Tibial artery (tissue), 4 donors: ENCODE measurements at regions of chr3 and their contacts with region 1.

Region 1: GRCh38 chr3:129745253-129745652 is 138.8 kb upstream of the PLXND1 start:
- DNase-seq: no peak
- H3K4me3 ChIP-seq: no peak overlapping the region
- H3K27ac ChIP-seq: no peak overlapping the region
- H3K4me1 ChIP-seq: peaks cover 0 to 9% (median 2%) of the 10 kb centered on the region in 4 donors
- H3K27me3 ChIP-seq: no peaks in the 10 kb centered on the region
- CTCF ChIP-seq: no peak

Region 2: DNA sequence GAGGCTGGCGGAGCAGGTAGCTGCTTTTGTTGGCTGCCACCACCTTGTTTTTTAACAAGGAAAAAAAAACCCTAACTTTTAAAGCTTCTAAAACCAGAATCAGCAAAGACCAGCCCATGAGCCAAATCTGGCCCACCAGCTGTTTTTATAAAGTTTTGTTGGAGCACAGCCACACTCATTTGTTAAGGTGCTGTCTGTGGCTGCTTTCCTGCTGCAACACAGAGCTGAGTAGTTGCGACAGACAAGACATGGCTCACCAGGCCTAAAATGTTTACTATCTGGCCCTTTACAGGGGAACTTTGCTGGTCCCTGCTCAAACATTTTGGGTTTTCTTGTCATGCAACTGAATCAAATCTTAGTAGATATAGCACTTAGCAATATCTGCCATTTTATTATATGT is 335.7 kb before region 1 on chr3:
- intact Hi-C with region 1: loop called (anchors 5 kb)
- DNase-seq: no peak
- H3K4me3 ChIP-seq: no peak overlapping the region
- H3K27ac ChIP-seq: no peak overlapping the region
- H3K4me1 ChIP-seq: no peaks in the 10 kb centered on the region
- H3K27me3 ChIP-seq: peaks cover 0 to 4% of the 10 kb centered on the region in 2 donors
- CTCF ChIP-seq: no peak

Region 3: DNA sequence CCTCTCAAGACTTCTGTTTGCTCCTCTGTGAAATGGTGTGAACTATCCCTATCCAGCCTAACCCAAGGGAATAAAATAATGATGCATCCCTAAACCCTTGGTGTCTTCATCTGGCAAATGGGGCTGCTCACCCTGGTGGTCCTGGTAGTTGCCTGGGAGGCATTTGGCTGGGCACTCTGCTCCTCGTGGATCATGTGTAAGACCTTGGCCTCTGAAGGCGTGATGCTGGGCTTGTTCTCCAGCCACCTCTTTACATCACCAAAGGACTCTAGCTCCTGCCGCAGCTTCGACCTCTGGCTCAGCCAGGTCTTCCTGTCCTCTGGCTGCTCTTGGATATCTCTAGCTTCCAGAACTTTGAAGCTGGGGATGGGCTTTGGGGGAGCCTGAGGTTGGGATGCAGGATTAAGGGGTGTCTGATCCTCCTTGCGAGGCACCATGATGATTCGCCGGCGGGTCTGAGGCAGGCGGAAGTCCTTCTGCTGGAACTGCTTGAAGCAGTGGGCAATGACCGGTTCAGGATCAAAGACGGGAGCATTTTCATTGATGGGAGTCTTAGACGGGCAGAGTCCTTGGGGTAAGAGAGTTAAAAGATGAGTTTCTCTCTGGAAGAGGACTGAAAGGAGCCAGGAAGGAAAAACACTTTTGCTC is 323.9 kb before region 1 on chr3:
- intact Hi-C with region 1: no loop called
- DNase-seq: peak in 1 of 2 donors; percentile 58
- H3K4me3 ChIP-seq: no peak overlapping the region
- H3K27ac ChIP-seq: no peak overlapping the region
- H3K4me1 ChIP-seq: no peaks in the 10 kb centered on the region
- H3K27me3 ChIP-seq: peaks cover 0 to 8% of the 10 kb centered on the region in 2 donors
- CTCF ChIP-seq: no peak

Region 4: DNA sequence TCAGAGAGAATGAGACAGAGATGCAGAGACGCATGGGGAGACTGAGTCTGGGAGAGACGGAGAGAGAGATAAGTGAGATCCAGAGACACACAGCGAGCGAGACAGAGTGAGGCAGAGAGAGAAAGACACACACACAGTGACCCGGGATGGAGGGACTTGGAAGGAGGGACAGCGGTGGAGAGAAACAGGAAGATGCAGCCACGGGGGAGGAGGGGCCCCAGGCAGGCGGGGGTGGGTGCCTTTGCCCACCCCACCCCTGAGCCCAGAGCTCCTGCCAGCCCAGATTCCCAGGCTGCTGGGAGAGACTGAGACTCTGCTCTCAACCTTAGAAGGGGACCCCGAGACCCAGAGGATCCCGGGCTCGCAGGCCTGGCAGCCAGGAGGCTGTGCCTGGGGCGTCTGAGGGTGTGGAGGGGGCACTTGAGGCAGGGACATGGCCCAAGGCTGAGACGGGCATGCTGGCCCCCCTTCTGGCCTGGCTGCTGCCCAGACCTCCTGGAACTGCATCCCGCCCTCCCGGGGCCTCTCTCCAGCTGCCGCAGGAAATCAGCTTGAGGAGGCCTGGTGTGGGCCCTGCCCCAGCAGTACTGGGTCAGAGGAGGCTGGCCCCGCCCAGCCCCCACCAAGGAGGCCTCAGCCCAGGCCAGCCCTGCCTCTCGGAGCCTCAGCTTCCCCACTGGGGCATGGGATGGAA is 184.2 kb before region 1 on chr3:
- intact Hi-C with region 1: no loop called
- DNase-seq: peak; percentile 88 to 98
- H3K4me3 ChIP-seq: peak overlapping the region; percentile 35 to 40
- H3K27ac ChIP-seq: peak overlapping the region; percentile 86 to 90
- H3K4me1 ChIP-seq: peaks cover 9 to 89% (median 72%) of the 10 kb centered on the region in 4 donors
- H3K27me3 ChIP-seq: no peaks in the 10 kb centered on the region
- CTCF ChIP-seq: no peak

Region 5: GRCh38 chr3:129794311-129795185 is 49.3 kb after region 1 on chr3:
- intact Hi-C with region 1: no loop called
- DNase-seq: no peak
- H3K4me3 ChIP-seq: no peak overlapping the region
- H3K27ac ChIP-seq: no peak overlapping the region
- H3K4me1 ChIP-seq: peaks cover 0 to 25% (median 12%) of the 10 kb centered on the region in 4 donors
- H3K27me3 ChIP-seq: no peaks in the 10 kb centered on the region
- CTCF ChIP-seq: no peak